Posterior vena cava (tissue), 2 donors: ENCODE measurements at regions of chr6 and their contacts with region 1.

Region 1: GRCh38 chr6:44265007-44265721 is at the start of gene NFKBIE:
- DNase-seq: peak; percentile 98
- total RNA-seq, gene NFKBIE: 4.5 to 6.7 TPM

Region 2: GRCh38 chr6:44226368-44227146 is 38.6 kb before region 1 on chr6:
- intact Hi-C with region 1: loop called in 1 of 2 experiments (anchors 1 kb)
- DNase-seq: peak; percentile 77

Region 3: DNA sequence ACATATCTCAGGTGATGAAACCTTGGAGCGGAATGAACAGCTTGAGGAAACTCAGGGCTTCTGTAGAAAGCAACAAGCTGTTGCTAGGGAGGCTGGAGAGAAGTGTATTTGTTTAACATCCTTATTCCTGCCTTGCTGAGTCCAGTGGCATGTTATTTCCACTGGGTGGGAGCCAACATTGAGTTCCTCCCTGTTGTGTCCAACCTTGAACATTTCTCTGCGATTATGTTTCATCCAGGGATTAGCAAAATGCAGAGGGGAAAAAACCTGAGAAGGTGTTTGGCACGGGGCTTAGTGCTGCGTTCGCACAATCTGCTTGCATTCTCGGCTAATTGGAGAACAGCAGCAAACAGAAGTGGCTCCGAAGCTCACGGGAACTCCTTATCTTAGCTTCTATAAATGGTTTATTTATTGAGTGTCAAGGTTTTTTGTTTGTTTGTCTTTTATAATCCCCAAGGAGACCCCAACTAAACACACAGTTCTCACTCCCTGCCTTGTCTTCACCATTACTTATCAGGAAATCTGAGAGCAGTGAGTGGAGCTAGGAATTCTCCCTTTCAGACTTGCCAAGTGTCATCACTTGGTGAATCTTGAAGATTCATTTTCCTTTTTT is 535.1 kb after region 1 on chr6:
- intact Hi-C with region 1: no loop called
- DNase-seq: no peak